ENCODE measurements at regions of chr11 and their contacts with region 1.

Region 1: GRCh38 chr11:15650105-15650938 is 535.6 kb downstream of the INSC start:
- DNase-seq: peak; percentile 97
- ATAC-seq: peak; percentile 99

Region 2: GRCh38 chr11:15336021-15336420 is 314.3 kb before region 1 on chr11:
- intact Hi-C with region 1: loop called (anchors 10 kb)
- DNase-seq: no peak
- ATAC-seq: no peak

Region 3: DNA sequence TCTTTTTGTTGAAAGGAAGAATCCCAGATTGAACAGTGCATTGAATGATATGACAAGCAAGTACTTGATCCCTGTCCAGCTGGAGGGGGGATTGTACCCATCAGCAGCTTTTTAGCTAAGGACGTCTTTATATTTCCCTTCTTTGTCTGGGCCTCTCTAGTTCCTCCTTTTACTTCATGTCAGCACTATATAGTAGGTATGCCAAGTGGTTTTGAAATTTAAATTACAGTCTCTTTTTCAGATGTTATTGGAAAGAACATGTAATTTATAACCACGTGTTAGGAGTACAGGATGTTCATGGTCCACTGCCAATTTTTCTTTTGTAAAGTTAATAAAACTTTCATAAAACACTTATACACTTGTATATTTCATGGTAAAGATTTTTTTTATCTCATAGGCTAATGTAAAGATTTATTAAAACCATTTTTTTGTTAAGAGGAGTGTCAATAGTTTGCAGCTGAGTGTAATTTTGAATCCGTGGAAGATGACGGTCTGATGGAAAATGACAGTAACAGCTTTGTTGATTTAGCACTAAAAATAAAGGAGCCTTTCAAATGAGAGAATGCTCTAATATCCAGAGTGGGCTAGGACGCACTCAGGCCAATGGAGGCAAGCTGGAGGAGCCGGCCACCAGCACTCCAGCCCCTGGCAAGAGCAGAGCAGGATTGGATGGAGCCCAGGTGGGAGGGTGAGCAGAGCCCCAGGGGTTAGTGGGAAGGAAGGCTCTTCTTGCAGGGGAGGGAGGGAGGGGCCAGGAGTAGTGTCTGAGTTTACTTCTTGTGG is 47.3 kb before region 1 on chr11:
- intact Hi-C with region 1: no loop called
- DNase-seq: peak; percentile 59
- ATAC-seq: peak; percentile 53

Region 4: GRCh38 chr11:15819679-15820286 is 169.5 kb after region 1 on chr11:
- intact Hi-C with region 1: loop called (anchors 10 kb)
- DNase-seq: peak; percentile 85
- ATAC-seq: peak; percentile 92

Region 5: DNA sequence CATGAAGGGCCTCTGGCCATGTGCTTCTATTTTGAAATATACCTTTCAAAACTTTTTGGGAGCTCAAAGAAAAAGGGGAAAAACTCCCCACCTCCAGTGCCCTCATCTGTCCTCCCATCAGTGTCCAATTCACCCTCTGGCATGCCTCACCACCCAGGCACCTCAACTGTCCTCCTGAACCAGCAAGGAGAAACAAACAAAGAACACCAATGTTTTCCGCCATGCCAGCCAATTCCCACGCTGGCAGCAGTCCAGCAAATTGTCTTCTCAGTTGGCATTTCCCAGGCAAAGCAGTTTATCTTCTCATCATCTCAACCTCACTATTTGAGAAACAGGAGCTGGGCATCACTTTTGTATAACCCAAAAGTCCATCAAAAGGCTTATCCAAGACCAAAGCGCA is 209.1 kb after region 1 on chr11:
- intact Hi-C with region 1: no loop called
- DNase-seq: no peak
- ATAC-seq: no peak

Region 6: GRCh38 chr11:15941201-15941770 is 291.0 kb after region 1 on chr11:
- intact Hi-C with region 1: no loop called
- DNase-seq: peak; percentile 60
- ATAC-seq: peak; percentile 87

Region 7: GRCh38 chr11:16613512-16614381 is 963.4 kb after region 1 on chr11:
- intact Hi-C with region 1: loop called (anchors 10 kb)
- DNase-seq: peak; percentile 94
- ATAC-seq: peak; percentile 98